ENCODE measurements at regions of chr14 and their contacts with region 1.

Region 1: DNA sequence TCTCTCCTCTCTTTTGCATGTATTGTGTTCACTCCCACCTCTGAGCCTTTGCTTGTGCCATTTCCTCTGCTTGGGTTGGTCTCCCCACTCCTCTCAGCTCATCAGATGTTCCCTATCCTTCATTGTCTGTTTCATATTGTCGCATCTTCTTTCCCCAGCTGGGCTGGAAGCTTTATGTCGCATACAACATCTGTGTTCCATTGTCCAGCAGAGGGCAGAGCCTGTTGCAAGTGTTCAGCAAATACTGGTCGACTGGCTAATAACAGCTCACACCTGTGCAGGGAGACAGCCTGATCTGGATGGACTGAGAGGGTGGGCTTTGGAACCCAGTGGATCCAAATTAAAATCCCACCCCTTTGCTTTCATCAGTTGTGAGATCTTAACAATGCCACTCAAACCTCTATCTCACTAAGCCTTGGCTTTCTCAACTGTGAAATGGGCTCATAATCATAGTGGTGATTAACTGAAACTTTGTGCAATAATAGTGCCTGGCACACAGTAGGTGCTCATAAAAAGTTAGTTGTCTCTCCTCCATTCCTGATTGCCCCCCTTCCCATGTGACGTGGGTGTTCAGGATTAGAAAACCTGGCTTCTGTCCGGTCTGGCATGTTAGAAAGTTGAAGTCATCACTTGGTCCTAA is 75.8 kb downstream of the RIN3 start:
- DNase-seq: peak in 1 of 4 experiments; percentile 18
- ATAC-seq: peak; percentile 51; the same call in 2 of the 3 replicates
- H3K4me3 ChIP-seq: no peak overlapping the region
- H3K27ac ChIP-seq: no peak overlapping the region
- H3K4me1 ChIP-seq: no peaks in the 10 kb centered on the region; a peak in 1 of 5 replicates
- H3K27me3 ChIP-seq: no peaks in the 10 kb centered on the region
- CTCF ChIP-seq: peak; percentile 25 to 44 (median 35); a peak in 3 of 6 replicates
- EP300 ChIP-seq: no peak
- POLR2A ChIP-seq: no peak
- RAD21 ChIP-seq: no peak; a peak in 1 of 4 replicates

Region 2: GRCh38 chr14:92439537-92440344 is 149.6 kb before region 1 on chr14:
- CTCF ChIA-PET with region 1: no interaction called
- POLR2A ChIA-PET with region 1: no interaction called
- in situ Hi-C with region 1: no loop called
- intact Hi-C with region 1: no loop called
- DNase-seq: no peak
- ATAC-seq: no peak
- H3K4me3 ChIP-seq: no peak overlapping the region
- H3K27ac ChIP-seq: no peak overlapping the region
- H3K4me1 ChIP-seq: no peaks in the 10 kb centered on the region
- H3K27me3 ChIP-seq: peaks cover 0 to 6% of the 10 kb centered on the region in 2 experiments; a peak in 1 of 5 replicates
- CTCF ChIP-seq: no peak
- EP300 ChIP-seq: no peak
- POLR2A ChIP-seq: no peak
- RAD21 ChIP-seq: no peak

Region 3: DNA sequence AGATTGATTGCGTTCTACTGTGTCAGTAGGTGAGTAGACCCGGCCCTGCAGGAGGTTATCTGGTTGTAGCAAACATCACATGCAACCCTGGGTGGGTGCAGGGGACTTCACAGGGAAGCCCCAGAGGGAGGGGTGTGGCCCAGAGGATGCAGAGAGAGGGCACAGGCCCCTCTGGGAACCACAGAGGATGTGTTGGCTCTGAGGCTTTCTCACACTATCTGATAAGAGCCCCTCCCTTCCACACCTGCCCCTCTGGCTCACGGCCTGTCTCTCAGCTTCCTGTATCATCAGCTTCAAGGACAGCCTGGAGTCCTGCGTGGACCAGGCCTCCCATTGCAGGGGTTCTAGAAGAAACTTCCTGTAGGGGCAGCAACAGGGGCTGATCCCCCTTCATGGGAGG is 26.1 kb after region 1 on chr14:
- CTCF ChIA-PET with region 1: no interaction called
- POLR2A ChIA-PET with region 1: no interaction called
- in situ Hi-C with region 1: no loop called
- intact Hi-C with region 1: no loop called
- DNase-seq: no peak
- ATAC-seq: no peak
- H3K4me3 ChIP-seq: no peak overlapping the region
- H3K27ac ChIP-seq: no peak overlapping the region
- H3K4me1 ChIP-seq: no peaks in the 10 kb centered on the region; a peak in 1 of 5 replicates
- H3K27me3 ChIP-seq: peaks cover 0 to 10% of the 10 kb centered on the region in 2 experiments; a peak in 2 of 5 replicates
- CTCF ChIP-seq: no peak
- EP300 ChIP-seq: no peak
- POLR2A ChIP-seq: no peak
- RAD21 ChIP-seq: no peak

Region 4: DNA sequence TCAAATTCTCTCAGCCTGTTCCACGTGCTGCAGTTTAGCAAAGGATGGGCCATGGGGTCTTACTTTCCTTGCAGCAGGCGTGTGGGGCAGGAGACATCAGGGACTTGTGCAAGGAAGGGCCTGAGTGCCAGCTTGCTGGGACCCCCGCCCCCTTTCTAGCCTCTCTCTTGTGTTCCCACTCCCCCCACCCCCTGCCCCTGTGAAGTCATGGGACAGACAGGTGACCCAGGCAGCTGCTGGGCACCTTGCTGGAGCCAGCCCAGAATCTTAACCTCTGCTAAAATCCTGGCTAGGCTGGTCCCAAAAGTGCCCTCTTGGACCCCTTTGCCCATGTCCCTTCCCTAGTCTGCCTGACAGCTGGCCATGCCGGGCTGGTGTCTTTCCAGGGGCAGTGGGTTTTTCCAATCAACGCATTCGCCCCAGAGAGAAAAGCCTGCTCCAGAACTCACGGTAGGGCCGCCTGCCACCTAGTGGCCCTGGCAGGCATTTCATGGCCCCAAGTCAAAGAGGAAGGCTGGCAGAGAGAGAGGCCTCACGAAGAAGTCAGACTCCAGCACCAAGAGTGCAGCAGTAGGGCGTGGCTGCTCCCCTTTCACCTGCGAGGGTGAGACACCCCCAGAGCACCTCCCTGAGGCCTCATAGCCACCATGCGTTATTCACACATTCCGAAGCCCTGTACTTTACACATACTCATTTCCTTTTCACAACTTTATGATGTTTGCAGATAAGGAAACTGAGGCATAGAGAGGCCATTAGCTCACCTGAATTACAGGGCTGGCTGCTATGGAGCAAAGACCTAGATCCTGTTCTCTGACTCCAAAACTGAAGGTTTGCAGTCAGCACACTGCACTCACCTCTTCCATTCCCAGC is 91.7 kb after region 1 on chr14:
- CTCF ChIA-PET with region 1: interaction called, 4 read pairs
- POLR2A ChIA-PET with region 1: no interaction called
- in situ Hi-C with region 1: no loop called
- intact Hi-C with region 1: loop called (anchors 2 kb)
- DNase-seq: peak; percentile 58 to 66 (median 60)
- ATAC-seq: peak; percentile 89
- H3K4me3 ChIP-seq: no peak overlapping the region
- H3K27ac ChIP-seq: no peak overlapping the region
- H3K4me1 ChIP-seq: peaks cover 0 to 5% of the 10 kb centered on the region in 2 experiments; a peak in 2 of 5 replicates
- H3K27me3 ChIP-seq: no peaks in the 10 kb centered on the region
- CTCF ChIP-seq: peak; percentile 80 to 85 (median 81)
- EP300 ChIP-seq: no peak
- POLR2A ChIP-seq: no peak
- RAD21 ChIP-seq: peak; percentile 61 to 77